ENCODE measurements at regions of chr6 and their contacts with region 1.

Region 1: GRCh38 chr6:149316798-149317655 is 485 bp upstream of the TAB2 start:
- DNase-seq: peak; percentile 91
- H3K4me3 Mint-ChIP-seq: peak overlapping the region; percentile 95
- H3K27ac Mint-ChIP-seq: peak overlapping the region; percentile 85
- H3K4me1 Mint-ChIP-seq: peaks cover 44% of the 10 kb centered on the region
- H3K27me3 Mint-ChIP-seq: no peaks in the 10 kb centered on the region

Region 2: GRCh38 chr6:149094156-149094555 is 222.9 kb before region 1 on chr6:
- intact Hi-C with region 1: loop called (anchors 1 kb)
- DNase-seq: no peak
- H3K4me3 Mint-ChIP-seq: peak overlapping the region; percentile 50
- H3K27ac Mint-ChIP-seq: peak overlapping the region; percentile 84
- H3K4me1 Mint-ChIP-seq: peaks cover 63% of the 10 kb centered on the region
- H3K27me3 Mint-ChIP-seq: no peaks in the 10 kb centered on the region

Region 3: DNA sequence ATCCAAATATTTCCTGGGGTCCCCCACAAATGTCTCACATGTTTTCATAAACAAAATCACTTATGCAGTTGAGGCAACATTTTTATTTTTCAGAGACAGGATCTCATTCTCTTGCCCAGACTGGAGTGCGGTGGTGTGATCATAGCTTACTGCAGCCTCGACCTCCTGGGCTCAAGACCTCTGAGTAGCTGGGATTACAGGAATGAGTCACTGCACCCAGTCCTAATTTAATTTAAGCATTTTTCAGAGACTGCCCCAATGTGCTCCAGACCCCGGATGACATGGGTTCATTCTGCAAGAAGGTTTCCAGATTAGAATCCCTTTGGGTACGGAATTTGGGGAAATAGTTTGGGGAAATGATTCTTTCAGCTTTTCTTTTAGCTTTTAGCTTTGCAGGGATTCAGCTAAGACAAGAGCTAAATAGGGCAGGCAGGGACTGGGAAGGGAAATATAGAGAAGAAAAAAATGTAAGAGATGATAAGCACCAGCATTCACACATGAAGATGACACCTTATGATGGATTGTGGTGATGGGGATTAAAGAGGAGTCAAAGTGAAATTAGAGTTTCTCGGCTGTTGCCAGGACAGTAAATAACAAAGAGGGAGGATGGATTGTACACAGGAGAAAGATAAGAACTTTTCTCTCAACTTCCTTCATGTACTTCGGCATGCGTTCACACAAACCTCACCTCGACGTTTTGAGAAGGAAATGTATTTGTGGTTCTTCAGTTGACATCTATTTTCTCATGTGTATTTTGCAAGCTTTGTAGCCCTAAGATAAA is 168.9 kb before region 1 on chr6:
- intact Hi-C with region 1: loop called (anchors 2 kb)
- DNase-seq: peak; percentile 41
- H3K4me3 Mint-ChIP-seq: peak overlapping the region; percentile 31
- H3K27ac Mint-ChIP-seq: peak overlapping the region; percentile 97
- H3K4me1 Mint-ChIP-seq: peaks cover 73% of the 10 kb centered on the region
- H3K27me3 Mint-ChIP-seq: no peaks in the 10 kb centered on the region

Region 4: DNA sequence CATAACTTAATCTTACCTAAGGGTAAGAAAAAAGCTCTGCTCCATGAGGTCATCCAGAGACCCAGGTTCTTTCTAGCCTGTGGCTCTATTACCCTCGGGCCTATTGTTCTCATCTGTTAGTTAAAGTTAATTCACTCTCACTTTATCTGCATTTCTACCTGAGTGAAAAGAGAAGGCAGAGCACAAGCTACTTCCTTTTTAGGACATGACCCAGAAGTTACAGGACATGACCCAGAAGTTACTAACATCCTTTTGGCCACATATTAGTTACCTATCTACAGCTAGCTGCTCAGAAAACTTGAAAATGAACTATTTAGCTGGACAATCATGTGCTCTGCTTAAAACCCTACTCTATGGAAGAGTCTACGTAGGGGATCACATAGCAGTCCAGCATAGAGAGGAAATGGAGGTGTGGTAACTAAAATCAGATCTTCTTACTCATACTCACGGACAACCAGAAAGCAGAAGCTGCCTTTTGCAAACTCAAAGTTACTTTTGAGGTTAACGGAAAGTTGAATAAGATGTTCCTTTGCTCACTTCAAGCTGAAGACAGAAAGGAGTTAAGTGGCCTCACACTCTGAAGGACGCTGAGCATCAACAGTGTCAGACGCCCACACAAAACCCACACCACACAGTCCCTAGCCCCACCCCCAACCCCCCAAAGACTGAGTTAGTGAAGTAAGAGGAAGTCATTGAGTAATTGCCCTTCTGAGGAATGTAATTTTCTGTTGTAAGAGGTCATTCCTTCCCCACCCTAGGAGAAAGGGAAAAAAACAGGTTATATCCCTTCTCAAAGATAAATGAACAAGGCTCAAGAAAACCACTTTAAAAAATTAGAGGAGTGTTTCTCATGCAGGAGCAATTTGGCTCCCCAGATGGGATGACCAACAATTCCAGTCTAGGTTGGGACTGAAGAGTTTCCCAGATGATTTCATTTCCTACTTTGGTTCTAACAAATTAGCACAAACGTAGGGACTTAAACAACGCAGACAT is 45.4 kb before region 1 on chr6:
- intact Hi-C with region 1: loop called (anchors 2 kb)
- DNase-seq: no peak
- H3K4me3 Mint-ChIP-seq: peak overlapping the region; percentile 58
- H3K27ac Mint-ChIP-seq: peak overlapping the region; percentile 83
- H3K4me1 Mint-ChIP-seq: peaks cover 39% of the 10 kb centered on the region
- H3K27me3 Mint-ChIP-seq: no peaks in the 10 kb centered on the region

Region 5: GRCh38 chr6:149335924-149336608 is 19.0 kb after region 1 on chr6:
- intact Hi-C with region 1: loop called (anchors 1 kb)
- DNase-seq: no peak
- H3K4me3 Mint-ChIP-seq: peak overlapping the region; percentile 45
- H3K27ac Mint-ChIP-seq: peak overlapping the region; percentile 88
- H3K4me1 Mint-ChIP-seq: peaks cover 80% of the 10 kb centered on the region
- H3K27me3 Mint-ChIP-seq: no peaks in the 10 kb centered on the region

Region 6: GRCh38 chr6:149484733-149485700 is 168.0 kb after region 1 on chr6 and contains the start of gene ZC3H12D:
- intact Hi-C with region 1: loop called (anchors 5 kb)
- DNase-seq: peak; percentile 70
- H3K4me3 Mint-ChIP-seq: peak within 1 kb of the TSS; percentile 79
- H3K27ac Mint-ChIP-seq: peak within 1 kb of the TSS; percentile 99
- H3K4me1 Mint-ChIP-seq: peaks cover 53% of the 10 kb centered on the region
- H3K27me3 Mint-ChIP-seq: no peaks in the 10 kb centered on the region
- total RNA-seq, gene ZC3H12D: 15.0 and 15.6 TPM in 2 replicates